Heart left ventricle (tissue), 16 donors: ENCODE measurements at regions of chr12 and their contacts with region 1.

Region 1: GRCh38 chr12:132489602-132490239 is at the start of gene FBRSL1:
- DNase-seq: peak; percentile 91 to 96 (median 92)
- ATAC-seq: peak; percentile 62 to 87 (median 84)
- H3K4me3 ChIP-seq: peak within 1 kb of the TSS; percentile 63 to 97 (median 81)
- H3K27ac ChIP-seq: peak within 1 kb of the TSS; percentile 66 to 95 (median 90)
- H3K4me1 ChIP-seq: peaks cover 4 to 57% (median 49%) of the 10 kb centered on the region in 12 donors
- H3K27me3 ChIP-seq: no peaks in the 10 kb centered on the region
- CTCF ChIP-seq: peak in 2 of 12 donors; percentile 12 to 14
- POLR2A ChIP-seq: no peak
- total RNA-seq, gene FBRSL1: 23.0 to 88.2 (median 45.4) TPM

Region 2: DNA sequence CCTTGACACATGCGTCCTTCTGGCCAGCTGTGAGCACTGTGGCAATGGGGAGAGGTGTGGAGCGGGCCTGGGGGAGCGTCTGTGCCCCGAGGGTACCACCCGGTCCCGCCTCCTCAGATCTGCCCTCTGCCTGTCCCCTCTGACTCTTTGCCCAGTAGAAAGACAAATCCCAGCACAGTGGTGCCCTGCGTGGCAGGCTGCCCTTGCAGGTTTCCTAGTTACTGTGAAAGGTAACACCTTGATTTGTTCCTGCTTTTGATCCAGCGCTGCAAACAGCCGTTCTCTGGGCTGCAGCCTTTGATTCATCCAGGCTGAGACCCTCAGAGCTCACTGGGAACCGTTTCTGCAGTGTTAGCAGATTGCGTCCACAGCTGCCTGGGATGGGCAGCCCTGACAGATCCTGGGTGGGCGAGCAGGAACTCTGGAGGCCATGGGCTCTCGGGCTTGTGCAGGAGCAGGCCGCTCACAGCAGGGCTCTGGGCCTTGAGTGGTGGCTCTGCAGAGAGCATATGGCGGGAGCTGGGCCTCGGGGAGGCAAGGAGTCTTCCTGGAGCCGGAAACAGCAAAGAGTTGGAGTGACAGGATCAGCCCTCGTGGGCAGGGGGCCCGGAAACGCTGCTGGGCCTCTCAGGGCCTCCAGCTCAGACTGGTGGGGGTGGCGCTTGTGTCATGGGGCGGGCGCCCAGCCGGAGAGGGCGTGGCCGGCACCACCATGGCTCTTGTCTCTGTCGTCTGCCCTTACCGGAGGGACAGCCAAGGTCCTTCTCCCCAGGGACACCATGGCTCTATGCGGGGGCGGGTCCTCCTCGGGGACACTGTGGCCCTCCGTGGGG is 16.8 kb after region 1 on chr12:
- intact Hi-C with region 1: loop called in 1 of 10 experiments (anchors 2 kb)
- DNase-seq: peak; percentile 90 to 93 (median 92)
- ATAC-seq: peak; percentile 84 to 96 (median 94)
- H3K4me3 ChIP-seq: peak overlapping the region in 11 of 12 donors; percentile 8 to 37 (median 26)
- H3K27ac ChIP-seq: peak overlapping the region; percentile 69 to 90 (median 76)
- H3K4me1 ChIP-seq: peaks cover 15 to 77% (median 57%) of the 10 kb centered on the region in 12 donors
- H3K27me3 ChIP-seq: no peaks in the 10 kb centered on the region
- CTCF ChIP-seq: no peak
- POLR2A ChIP-seq: no peak

Region 3: GRCh38 chr12:132593521-132594358 is 104.0 kb after region 1 on chr12:
- intact Hi-C with region 1: loop called in 1 of 10 experiments (anchors 10 kb)
- DNase-seq: peak; percentile 88 to 98 (median 94)
- ATAC-seq: peak; percentile 98 to 99 (median 99)
- H3K4me3 ChIP-seq: peak overlapping the region in 5 of 12 donors; percentile 20 to 38 (median 28)
- H3K27ac ChIP-seq: no peak overlapping the region
- H3K4me1 ChIP-seq: peaks cover 0 to 17% (median 5%) of the 10 kb centered on the region in 12 donors
- H3K27me3 ChIP-seq: peaks cover 0 to 18% (median 0%) of the 10 kb centered on the region in 9 donors
- CTCF ChIP-seq: no peak
- POLR2A ChIP-seq: no peak

Region 4: GRCh38 chr12:132600048-132601032 is 110.6 kb after region 1 on chr12:
- intact Hi-C with region 1: loop called in 2 of 10 experiments (anchors 2 to 10 kb)
- DNase-seq: peak; percentile 62 to 82 (median 70)
- ATAC-seq: peak; percentile 56 to 80 (median 71)
- H3K4me3 ChIP-seq: peak overlapping the region in 11 of 12 donors; percentile 15 to 59 (median 43)
- H3K27ac ChIP-seq: peak overlapping the region in 5 of 12 donors; percentile 6 to 44 (median 21)
- H3K4me1 ChIP-seq: peaks cover 0 to 45% (median 15%) of the 10 kb centered on the region in 12 donors
- H3K27me3 ChIP-seq: peaks cover 0 to 66% (median 20%) of the 10 kb centered on the region in 9 donors
- CTCF ChIP-seq: peak; percentile 40 to 78 (median 66)
- POLR2A ChIP-seq: no peak